ENCODE measurements at regions of chr11 and their contacts with region 1.

Region 1: DNA sequence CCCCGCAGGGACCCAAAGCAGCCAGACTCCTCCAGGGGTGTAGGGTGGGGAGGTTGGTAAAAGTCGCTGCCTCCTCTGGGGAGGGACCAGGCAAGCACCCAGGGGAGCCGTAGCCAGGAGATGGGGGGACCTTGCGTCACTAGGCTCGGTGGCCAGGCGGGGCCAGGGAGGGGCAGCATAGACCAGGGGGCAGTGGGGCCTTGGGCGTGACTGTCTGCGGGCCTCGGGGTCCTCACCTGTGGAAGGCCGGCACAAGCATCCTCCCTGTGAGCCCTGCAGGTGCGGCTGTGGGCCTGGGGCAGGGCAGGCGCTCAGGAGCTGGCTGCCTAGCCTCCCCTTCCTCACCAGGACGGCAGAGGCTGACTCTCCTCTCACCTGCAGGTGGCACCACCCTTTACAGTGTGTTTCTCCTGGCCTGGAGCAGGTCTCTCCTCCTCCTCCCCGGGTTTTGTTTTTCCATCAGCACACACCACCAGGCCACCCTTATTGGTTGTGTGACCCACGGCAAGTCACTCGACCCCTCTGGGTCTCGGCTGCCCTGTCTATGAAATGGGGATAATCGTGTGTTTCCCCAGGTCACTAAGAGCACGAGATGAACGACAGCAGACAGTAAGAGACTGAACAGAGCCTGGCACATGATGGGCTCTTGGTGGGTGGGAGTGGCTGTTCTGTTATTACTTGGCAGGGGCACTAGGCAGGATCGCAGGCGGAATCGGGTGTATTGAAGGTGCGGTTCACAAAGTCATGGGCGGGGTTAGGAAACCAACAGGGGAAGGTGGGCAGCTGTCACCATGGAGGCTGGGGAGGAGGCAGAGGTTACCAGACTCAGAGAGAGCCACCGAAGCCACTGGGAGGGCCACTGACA is 52.7 kb downstream of the FLRT1 start:
- DNase-seq: peak; percentile 79
- ATAC-seq: peak; percentile 93
- H3K4me3 Mint-ChIP-seq: no peak overlapping the region
- H3K27ac Mint-ChIP-seq: no peak overlapping the region
- H3K4me1 Mint-ChIP-seq: peaks cover 21% of the 10 kb centered on the region
- H3K27me3 Mint-ChIP-seq: peaks cover 32% of the 10 kb centered on the region
- CTCF ChIP-seq: no peak

Region 2: DNA sequence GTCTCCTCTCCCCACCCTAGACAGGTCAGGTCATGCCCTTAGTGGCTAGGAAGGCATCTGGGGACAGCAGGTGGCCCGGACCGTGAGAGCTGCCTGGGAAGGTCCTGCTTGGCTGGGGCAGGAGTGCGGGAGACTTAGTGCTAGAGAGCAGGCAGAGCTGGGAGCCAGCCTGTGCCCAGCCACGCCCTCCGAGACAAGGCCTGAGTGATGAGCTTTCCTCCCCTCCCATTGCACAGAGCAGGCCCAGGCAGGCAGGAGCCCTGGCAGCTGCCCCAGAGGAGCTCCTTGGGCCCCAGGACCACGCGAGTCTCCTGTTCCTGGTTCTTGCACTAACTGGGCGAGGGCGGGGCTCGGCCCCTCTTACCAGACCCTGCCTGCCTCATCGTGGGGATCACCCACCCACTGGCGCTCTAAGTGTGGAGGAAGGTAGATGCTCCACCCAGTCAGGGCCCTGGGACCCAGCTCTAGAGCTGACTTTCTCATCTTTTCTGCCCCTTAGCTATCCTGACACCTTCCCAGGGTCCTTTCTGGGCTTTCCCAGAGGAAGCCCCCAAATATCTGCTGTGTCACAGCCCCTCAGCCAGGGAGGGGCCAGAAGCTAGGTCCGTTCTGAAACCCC is 32.7 kb after region 1 on chr11:
- CTCF ChIA-PET with region 1: interaction called, 10 read pairs
- POLR2A ChIA-PET with region 1: no interaction called
- DNase-seq: no peak
- ATAC-seq: no peak; the same call in 1 of the 2 replicates
- H3K4me3 Mint-ChIP-seq: no peak overlapping the region
- H3K27ac Mint-ChIP-seq: peak overlapping the region; percentile 60; the same call in 1 of the 2 replicates
- H3K4me1 Mint-ChIP-seq: peaks cover 38% of the 10 kb centered on the region
- H3K27me3 Mint-ChIP-seq: peaks cover 60% of the 10 kb centered on the region
- CTCF ChIP-seq: no peak